HCT116 (cell line): ENCODE measurements at regions of chr5 and their contacts with region 1.

Region 1: GRCh38 chr5:39309534-39310305 is 54.6 kb downstream of the C9 start:
- DNase-seq: no peak
- ATAC-seq: no peak
- H3K4me3 ChIP-seq: no peak overlapping the region
- H3K27ac ChIP-seq: no peak overlapping the region
- H3K4me1 ChIP-seq: no peaks in the 10 kb centered on the region
- H3K27me3 ChIP-seq: no peaks in the 10 kb centered on the region
- CTCF ChIP-seq: no peak
- POLR2A ChIP-seq: no peak
- RAD21 ChIP-seq: no peak

Region 2: DNA sequence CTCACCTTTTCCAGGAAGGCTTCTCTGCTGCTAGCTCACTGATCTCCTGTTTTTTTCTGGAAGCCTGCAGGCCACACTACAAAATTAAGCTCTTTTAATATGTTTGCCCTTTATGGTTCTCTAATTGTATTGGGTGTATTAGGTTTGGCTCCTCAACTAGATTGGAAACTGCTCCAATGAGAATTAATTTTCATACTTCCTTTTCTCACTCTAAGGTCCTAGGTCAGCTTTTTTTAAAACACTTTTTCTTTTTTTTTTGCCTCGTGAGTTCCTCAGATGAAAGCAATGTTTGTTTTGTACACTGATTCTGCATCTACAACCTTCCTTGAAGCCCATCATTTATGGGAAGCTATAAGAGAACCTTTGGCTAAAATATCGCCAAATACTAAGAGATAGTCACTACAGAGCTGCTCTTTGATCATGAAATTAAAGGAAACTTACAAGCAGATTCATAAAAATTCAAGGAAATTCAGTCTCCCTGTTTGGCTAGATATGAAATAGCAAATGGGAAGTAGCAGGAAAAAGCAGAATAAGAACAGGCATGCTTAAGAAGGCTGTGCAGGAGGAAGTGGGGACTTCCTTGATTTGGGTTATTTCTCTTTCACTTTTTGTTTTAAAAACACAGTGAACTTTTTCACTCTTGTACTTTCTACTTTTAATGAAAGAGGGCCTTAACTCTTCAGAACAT is 35.2 kb before region 1 on chr5:
- CTCF ChIA-PET with region 1: interaction called, 3 read pairs
- POLR2A ChIA-PET with region 1: no interaction called
- RAD21 ChIA-PET with region 1: no interaction called
- intact Hi-C with region 1: loop called (anchors 5 kb)
- DNase-seq: no peak
- ATAC-seq: no peak
- H3K4me3 ChIP-seq: no peak overlapping the region
- H3K27ac ChIP-seq: no peak overlapping the region
- H3K4me1 ChIP-seq: no peaks in the 10 kb centered on the region
- H3K27me3 ChIP-seq: no peaks in the 10 kb centered on the region
- CTCF ChIP-seq: no peak
- POLR2A ChIP-seq: no peak
- RAD21 ChIP-seq: no peak